Naive thymus-derived CD4-positive, alpha-beta T cell (primary cell): ENCODE measurements at regions of chr16 and their contacts with region 1.

Region 1: GRCh38 chr16:75148311-75149195 is at the start of gene ZFP1:
- DNase-seq: peak; percentile 91 to 98 (median 95)
- ATAC-seq: peak; percentile 93
- H3K4me3 ChIP-seq: peak within 1 kb of the TSS; percentile 98
- H3K4me3 Mint-ChIP-seq: peak within 1 kb of the TSS; percentile 85 to 92 (median 89)
- H3K27ac ChIP-seq: peak within 1 kb of the TSS; percentile 89
- H3K27ac Mint-ChIP-seq: peak within 1 kb of the TSS; percentile 66 to 90 (median 86)
- H3K4me1 ChIP-seq: peaks cover 0 to 6% of the 10 kb centered on the region in 2 donors
- H3K4me1 Mint-ChIP-seq: peaks cover 13 to 31% (median 27%) of the 10 kb centered on the region in 7 donors
- H3K27me3 ChIP-seq: no peaks in the 10 kb centered on the region
- H3K27me3 Mint-ChIP-seq: no peaks in the 10 kb centered on the region
- total RNA-seq, gene ZFP1: 8.6 to 13.4 (median 10.1) TPM

Region 2: GRCh38 chr16:74666425-74667254 is 481.9 kb before region 1 on chr16 and contains the start of gene RFWD3:
- CTCF ChIA-PET with region 1: no interaction called
- POLR2A ChIA-PET with region 1: no interaction called
- intact Hi-C with region 1: loop called in 1 of 2 experiments (anchors 2 kb)
- DNase-seq: peak; percentile 80 to 99 (median 97)
- ATAC-seq: peak; percentile 100
- H3K4me3 ChIP-seq: peak within 1 kb of the TSS; percentile 89
- H3K4me3 Mint-ChIP-seq: peak within 1 kb of the TSS; percentile 87 to 98 (median 95)
- H3K27ac ChIP-seq: peak within 1 kb of the TSS; percentile 86
- H3K27ac Mint-ChIP-seq: peak within 1 kb of the TSS; percentile 92 to 97 (median 95)
- H3K4me1 ChIP-seq: peaks cover 0 to 10% of the 10 kb centered on the region in 2 donors
- H3K4me1 Mint-ChIP-seq: peaks cover 26 to 48% (median 44%) of the 10 kb centered on the region in 7 donors
- H3K27me3 ChIP-seq: no peaks in the 10 kb centered on the region
- H3K27me3 Mint-ChIP-seq: peaks cover 0 to 2% (median 0%) of the 10 kb centered on the region in 5 donors
- total RNA-seq, gene RFWD3: 39.3 to 88.0 (median 56.9) TPM

Region 3: GRCh38 chr16:74984535-74985296 is 163.8 kb before region 1 on chr16 and contains the start of gene WDR59:
- CTCF ChIA-PET with region 1: no interaction called
- POLR2A ChIA-PET with region 1: no interaction called
- intact Hi-C with region 1: loop called (anchors 1 kb)
- DNase-seq: peak; percentile 87 to 99 (median 98)
- ATAC-seq: peak; percentile 100
- H3K4me3 ChIP-seq: peak within 1 kb of the TSS; percentile 98
- H3K4me3 Mint-ChIP-seq: peak within 1 kb of the TSS; percentile 90 to 98 (median 95)
- H3K27ac ChIP-seq: peak within 1 kb of the TSS; percentile 86
- H3K27ac Mint-ChIP-seq: peak within 1 kb of the TSS; percentile 72 to 96 (median 92)
- H3K4me1 ChIP-seq: peaks cover 5 to 6% of the 10 kb centered on the region in 2 donors
- H3K4me1 Mint-ChIP-seq: peaks cover 0 to 27% (median 23%) of the 10 kb centered on the region in 7 donors
- H3K27me3 ChIP-seq: no peaks in the 10 kb centered on the region
- H3K27me3 Mint-ChIP-seq: no peaks in the 10 kb centered on the region
- total RNA-seq, gene WDR59: 82.7 to 130 (median 84.7) TPM

Region 4: DNA sequence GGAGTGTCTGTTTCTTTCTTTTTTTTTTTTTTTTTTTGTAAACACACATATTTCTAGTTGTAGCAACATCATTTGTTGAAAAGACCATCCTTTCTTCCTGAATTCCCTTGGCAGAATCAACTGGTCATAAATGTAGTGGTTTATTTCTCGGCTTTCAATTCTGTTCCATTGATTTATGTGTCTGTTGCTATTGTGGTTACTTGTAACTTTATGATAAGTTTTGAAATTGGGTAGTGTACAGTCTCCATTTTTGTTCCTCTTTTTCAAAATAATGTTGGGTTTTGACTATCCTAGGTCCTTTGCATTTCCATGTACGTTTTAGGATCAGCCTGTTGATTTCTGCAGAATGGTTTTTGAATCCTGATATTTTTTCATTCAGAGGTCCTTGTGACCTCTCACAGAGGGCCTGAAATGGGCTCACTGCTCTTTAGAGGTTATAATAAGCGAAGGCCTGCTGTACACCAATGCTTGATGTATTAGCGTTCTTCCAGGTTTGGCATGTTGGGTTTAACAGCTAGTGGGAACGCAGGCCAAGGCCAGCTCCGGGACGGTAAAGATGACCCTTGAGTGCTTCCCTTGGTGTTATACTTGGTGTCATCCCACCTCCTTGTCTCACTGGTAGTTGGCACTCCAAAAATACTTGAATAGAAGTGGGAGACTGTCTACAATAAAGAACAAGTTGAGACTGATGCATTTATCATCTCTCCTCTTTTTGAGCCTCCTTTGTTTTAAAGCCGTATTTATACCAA is 106.0 kb before region 1 on chr16:
- CTCF ChIA-PET with region 1: no interaction called
- POLR2A ChIA-PET with region 1: no interaction called
- intact Hi-C with region 1: no loop called
- DNase-seq: no peak
- ATAC-seq: peak; percentile 34
- H3K4me3 ChIP-seq: no peak overlapping the region
- H3K4me3 Mint-ChIP-seq: no peak overlapping the region
- H3K27ac ChIP-seq: no peak overlapping the region
- H3K27ac Mint-ChIP-seq: peak overlapping the region in 3 of 9 donors; percentile 16 to 49 (median 24)
- H3K4me1 ChIP-seq: peaks cover 0 to 3% of the 10 kb centered on the region in 2 donors
- H3K4me1 Mint-ChIP-seq: peaks cover 0 to 31% (median 17%) of the 10 kb centered on the region in 7 donors
- H3K27me3 ChIP-seq: no peaks in the 10 kb centered on the region
- H3K27me3 Mint-ChIP-seq: no peaks in the 10 kb centered on the region

Region 5: DNA sequence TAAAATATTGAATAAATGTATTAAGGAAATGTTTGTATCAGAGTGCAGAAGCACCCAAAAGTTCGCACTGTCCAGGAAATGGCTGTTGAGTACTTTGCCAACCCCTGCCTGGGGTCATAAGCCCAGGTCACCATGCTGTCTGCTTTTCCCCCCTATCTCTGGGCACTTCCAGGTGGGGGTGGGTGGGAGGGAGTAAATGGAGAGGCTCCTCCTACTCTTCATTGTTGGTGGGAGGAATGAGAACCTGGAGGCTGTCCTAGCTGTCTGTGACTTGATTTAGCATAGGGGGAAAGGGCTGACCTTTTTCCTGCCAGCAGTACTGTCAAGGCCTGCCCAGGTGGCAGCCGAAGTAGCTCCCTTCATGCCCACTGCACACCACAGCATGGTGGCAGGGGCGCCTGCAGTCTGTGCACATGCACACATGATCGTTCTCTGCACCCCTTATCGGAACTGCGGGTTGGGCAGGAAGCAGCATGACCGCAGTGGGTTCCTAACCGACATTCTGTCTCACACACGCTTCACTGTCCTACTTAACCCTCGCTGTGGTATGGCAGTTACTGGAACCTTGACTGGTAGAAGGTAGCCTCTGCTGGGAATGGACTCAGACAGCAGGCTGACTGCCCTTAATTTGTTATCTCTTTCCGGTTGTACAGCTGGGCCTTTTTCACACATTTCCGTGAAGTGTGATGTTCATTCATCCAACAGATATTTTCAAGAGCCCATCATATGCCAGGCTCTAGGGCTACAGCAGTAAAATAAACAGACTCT is 73.4 kb before region 1 on chr16:
- CTCF ChIA-PET with region 1: no interaction called
- POLR2A ChIA-PET with region 1: no interaction called
- intact Hi-C with region 1: loop called (anchors 2 kb)
- DNase-seq: peak; percentile 45 to 86 (median 77)
- ATAC-seq: peak; percentile 97
- H3K4me3 ChIP-seq: peak overlapping the region; percentile 37
- H3K4me3 Mint-ChIP-seq: peak overlapping the region; percentile 58 to 83 (median 76)
- H3K27ac ChIP-seq: peak overlapping the region; percentile 36
- H3K27ac Mint-ChIP-seq: peak overlapping the region; percentile 84 to 100 (median 89)
- H3K4me1 ChIP-seq: peaks cover 16 to 38% of the 10 kb centered on the region in 2 donors
- H3K4me1 Mint-ChIP-seq: peaks cover 42 to 76% (median 64%) of the 10 kb centered on the region in 7 donors
- H3K27me3 ChIP-seq: no peaks in the 10 kb centered on the region
- H3K27me3 Mint-ChIP-seq: peaks cover 0 to 4% (median 0%) of the 10 kb centered on the region in 5 donors

Region 6: GRCh38 chr16:75198135-75198600 is 49.6 kb after region 1 on chr16:
- CTCF ChIA-PET with region 1: interaction called, 3 read pairs
- POLR2A ChIA-PET with region 1: no interaction called
- intact Hi-C with region 1: loop called in 1 of 2 experiments (anchors 1 kb)
- DNase-seq: no peak
- ATAC-seq: no peak
- H3K4me3 ChIP-seq: no peak overlapping the region
- H3K4me3 Mint-ChIP-seq: no peak overlapping the region
- H3K27ac ChIP-seq: no peak overlapping the region
- H3K27ac Mint-ChIP-seq: no peak overlapping the region
- H3K4me1 ChIP-seq: peaks cover 0 to 14% of the 10 kb centered on the region in 2 donors
- H3K4me1 Mint-ChIP-seq: peaks cover 10 to 29% (median 22%) of the 10 kb centered on the region in 7 donors
- H3K27me3 ChIP-seq: peaks cover 0 to 3% of the 10 kb centered on the region in 2 donors
- H3K27me3 Mint-ChIP-seq: peaks cover 12 to 24% (median 14%) of the 10 kb centered on the region in 5 donors

Region 7: GRCh38 chr16:75519881-75520280 is 371.3 kb after region 1 on chr16:
- CTCF ChIA-PET with region 1: no interaction called
- POLR2A ChIA-PET with region 1: no interaction called
- intact Hi-C with region 1: loop called (anchors 1 kb)
- DNase-seq: no peak
- ATAC-seq: no peak
- H3K4me3 ChIP-seq: no peak overlapping the region
- H3K4me3 Mint-ChIP-seq: no peak overlapping the region
- H3K27ac ChIP-seq: no peak overlapping the region
- H3K27ac Mint-ChIP-seq: no peak overlapping the region
- H3K4me1 ChIP-seq: peaks cover 0 to 3% of the 10 kb centered on the region in 2 donors
- H3K4me1 Mint-ChIP-seq: peaks cover 5 to 17% (median 13%) of the 10 kb centered on the region in 7 donors
- H3K27me3 ChIP-seq: no peaks in the 10 kb centered on the region
- H3K27me3 Mint-ChIP-seq: peaks cover 0 to 9% (median 0%) of the 10 kb centered on the region in 5 donors

Region 8: GRCh38 chr16:75622761-75623605 is 474.4 kb after region 1 on chr16 and contains the start of gene ADAT1:
- CTCF ChIA-PET with region 1: no interaction called
- POLR2A ChIA-PET with region 1: no interaction called
- intact Hi-C with region 1: loop called (anchors 1 to 10 kb)
- DNase-seq: peak; percentile 91 to 99 (median 97)
- ATAC-seq: peak; percentile 97
- H3K4me3 ChIP-seq: peak within 1 kb of the TSS; percentile 80
- H3K4me3 Mint-ChIP-seq: peak within 1 kb of the TSS; percentile 91 to 99 (median 96)
- H3K27ac ChIP-seq: peak within 1 kb of the TSS; percentile 93
- H3K27ac Mint-ChIP-seq: peak within 1 kb of the TSS; percentile 92 to 99 (median 97)
- H3K4me1 ChIP-seq: peaks cover 30 to 49% of the 10 kb centered on the region in 2 donors
- H3K4me1 Mint-ChIP-seq: peaks cover 29 to 76% (median 52%) of the 10 kb centered on the region in 7 donors
- H3K27me3 ChIP-seq: no peaks in the 10 kb centered on the region
- H3K27me3 Mint-ChIP-seq: no peaks in the 10 kb centered on the region
- total RNA-seq, gene ADAT1: 41.3 to 69.4 (median 63.6) TPM